ENCODE measurements at regions of chr11 and their contacts with region 1.

Region 1: GRCh38 chr11:65134386-65135253 is at the start of gene SYVN1:
- DNase-seq: peak; percentile 88 to 95 (median 93)
- ATAC-seq: peak; percentile 90
- H3K4me3 ChIP-seq: peak within 1 kb of the TSS; percentile 90
- H3K4me3 Mint-ChIP-seq: peak within 1 kb of the TSS; percentile 89 to 100 (median 99)
- H3K27ac ChIP-seq: peak within 1 kb of the TSS; percentile 99
- H3K27ac Mint-ChIP-seq: peak within 1 kb of the TSS; percentile 97 to 100 (median 99)
- H3K4me1 ChIP-seq: peaks cover 10 to 21% of the 10 kb centered on the region in 2 donors
- H3K4me1 Mint-ChIP-seq: peaks cover 31 to 50% (median 40%) of the 10 kb centered on the region in 7 donors
- H3K27me3 ChIP-seq: no peaks in the 10 kb centered on the region
- H3K27me3 Mint-ChIP-seq: no peaks in the 10 kb centered on the region
- total RNA-seq, gene SYVN1: 61.0 to 84.6 (median 67.9) TPM

Region 2: GRCh38 chr11:63681321-63682049 is 1453.1 kb before region 1 on chr11 and contains the start of gene RTN3:
- CTCF ChIA-PET with region 1: no interaction called
- POLR2A ChIA-PET with region 1: no interaction called
- intact Hi-C with region 1: loop called in 1 of 2 experiments (anchors 5 kb)
- DNase-seq: peak; percentile 97 to 99 (median 98)
- ATAC-seq: peak; percentile 95
- H3K4me3 ChIP-seq: peak within 1 kb of the TSS; percentile 86
- H3K4me3 Mint-ChIP-seq: peak within 1 kb of the TSS; percentile 89 to 97 (median 94)
- H3K27ac ChIP-seq: peak within 1 kb of the TSS; percentile 69
- H3K27ac Mint-ChIP-seq: peak within 1 kb of the TSS; percentile 50 to 97 (median 83)
- H3K4me1 ChIP-seq: peaks cover 6 to 17% of the 10 kb centered on the region in 2 donors
- H3K4me1 Mint-ChIP-seq: peaks cover 20 to 30% (median 27%) of the 10 kb centered on the region in 7 donors
- H3K27me3 ChIP-seq: no peaks in the 10 kb centered on the region
- H3K27me3 Mint-ChIP-seq: peaks cover 0 to 12% (median 0%) of the 10 kb centered on the region in 5 donors
- total RNA-seq, gene RTN3: 20.8 to 65.7 (median 34.4) TPM

Region 3: GRCh38 chr11:64566042-64566914 is 568.3 kb before region 1 on chr11:
- CTCF ChIA-PET with region 1: no interaction called
- POLR2A ChIA-PET with region 1: no interaction called
- intact Hi-C with region 1: no loop called
- DNase-seq: peak in 6 of 9 donors; percentile 8 to 61 (median 17)
- ATAC-seq: peak; percentile 80
- H3K4me3 ChIP-seq: no peak overlapping the region
- H3K4me3 Mint-ChIP-seq: peak overlapping the region in 4 of 10 donors; percentile 13 to 41 (median 30)
- H3K27ac ChIP-seq: no peak overlapping the region
- H3K27ac Mint-ChIP-seq: peak overlapping the region in 5 of 9 donors; percentile 50 to 72 (median 64)
- H3K4me1 ChIP-seq: no peaks in the 10 kb centered on the region
- H3K4me1 Mint-ChIP-seq: peaks cover 0 to 7% (median 4%) of the 10 kb centered on the region in 7 donors
- H3K27me3 ChIP-seq: no peaks in the 10 kb centered on the region
- H3K27me3 Mint-ChIP-seq: no peaks in the 10 kb centered on the region

Region 4: DNA sequence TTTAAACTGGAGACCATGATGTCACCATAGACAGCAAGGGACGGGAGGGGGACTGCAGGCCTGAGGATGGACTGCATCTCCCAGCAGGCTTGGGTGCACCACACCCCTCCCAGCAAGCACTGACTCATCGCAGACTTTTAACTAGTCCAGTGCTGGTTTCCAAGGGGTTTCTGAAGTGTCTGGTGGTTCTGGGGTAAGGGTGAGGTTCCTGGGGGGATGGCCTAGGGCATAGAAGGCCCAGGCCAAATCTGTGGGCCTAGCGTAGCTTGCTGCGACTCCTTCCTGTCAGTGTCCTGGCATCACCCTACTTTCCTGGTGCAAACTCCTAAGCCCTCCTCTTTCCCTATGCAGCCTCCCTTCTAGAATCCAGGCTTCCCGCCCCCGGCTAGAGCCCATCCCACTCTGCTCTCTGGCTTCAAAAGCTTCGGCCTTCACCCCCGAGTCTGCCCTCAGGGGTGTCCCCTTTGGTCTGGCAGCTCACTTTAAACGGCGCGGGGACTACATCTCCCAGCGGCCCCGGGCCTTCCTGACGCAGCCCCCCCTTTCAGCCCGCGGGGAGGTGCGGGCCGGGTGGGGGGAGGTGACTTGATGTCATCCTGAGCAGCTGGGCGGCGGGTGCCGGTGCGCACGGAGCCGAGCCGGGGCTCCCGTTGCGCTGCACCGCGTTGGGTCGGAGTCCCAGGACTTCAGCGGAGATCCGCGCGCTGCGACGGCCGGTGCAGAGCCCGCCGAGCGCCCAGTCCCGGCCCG is 210.3 kb before region 1 on chr11 and contains the start of gene PPP2R5B:
- CTCF ChIA-PET with region 1: interaction called, 3 read pairs
- POLR2A ChIA-PET with region 1: interaction called, 3 read pairs
- intact Hi-C with region 1: loop called in 1 of 2 experiments (anchors 1 kb)
- DNase-seq: peak; percentile 79 to 92 (median 89)
- ATAC-seq: peak; percentile 95
- H3K4me3 ChIP-seq: peak within 1 kb of the TSS; percentile 67
- H3K4me3 Mint-ChIP-seq: peak within 1 kb of the TSS; percentile 89 to 99 (median 96)
- H3K27ac ChIP-seq: peak within 1 kb of the TSS; percentile 81
- H3K27ac Mint-ChIP-seq: peak within 1 kb of the TSS; percentile 95 to 100 (median 98)
- H3K4me1 ChIP-seq: peaks cover 11 to 15% of the 10 kb centered on the region in 2 donors
- H3K4me1 Mint-ChIP-seq: peaks cover 9 to 24% (median 14%) of the 10 kb centered on the region in 7 donors
- H3K27me3 ChIP-seq: no peaks in the 10 kb centered on the region
- H3K27me3 Mint-ChIP-seq: no peaks in the 10 kb centered on the region
- total RNA-seq, gene PPP2R5B: 11.9 to 19.1 (median 18.8) TPM

Region 5: GRCh38 chr11:65083834-65084597 is 50.6 kb before region 1 on chr11 and contains the starts of genes CDCA5 and ZFPL1:
- CTCF ChIA-PET with region 1: no interaction called
- POLR2A ChIA-PET with region 1: interaction called, 12 read pairs
- intact Hi-C with region 1: loop called (anchors 1 kb)
- DNase-seq: peak; percentile 94 to 98 (median 97)
- ATAC-seq: peak; percentile 96
- H3K4me3 ChIP-seq: peak within 1 kb of the TSS; percentile 61
- H3K4me3 Mint-ChIP-seq: peak within 1 kb of the TSS; percentile 88 to 99 (median 93)
- H3K27ac ChIP-seq: peak within 1 kb of the TSS; percentile 86
- H3K27ac Mint-ChIP-seq: peak within 1 kb of the TSS; percentile 94 to 99 (median 97)
- H3K4me1 ChIP-seq: peaks cover 13 to 14% of the 10 kb centered on the region in 2 donors
- H3K4me1 Mint-ChIP-seq: peaks cover 20 to 49% (median 27%) of the 10 kb centered on the region in 7 donors
- H3K27me3 ChIP-seq: no peaks in the 10 kb centered on the region
- H3K27me3 Mint-ChIP-seq: peaks cover 0 to 4% (median 0%) of the 10 kb centered on the region in 5 donors
- total RNA-seq, gene CDCA5: 0.56 to 68.1 (median 0.81) TPM
- total RNA-seq, gene ZFPL1: 29.9 to 53.0 (median 49.3) TPM

Region 6: DNA sequence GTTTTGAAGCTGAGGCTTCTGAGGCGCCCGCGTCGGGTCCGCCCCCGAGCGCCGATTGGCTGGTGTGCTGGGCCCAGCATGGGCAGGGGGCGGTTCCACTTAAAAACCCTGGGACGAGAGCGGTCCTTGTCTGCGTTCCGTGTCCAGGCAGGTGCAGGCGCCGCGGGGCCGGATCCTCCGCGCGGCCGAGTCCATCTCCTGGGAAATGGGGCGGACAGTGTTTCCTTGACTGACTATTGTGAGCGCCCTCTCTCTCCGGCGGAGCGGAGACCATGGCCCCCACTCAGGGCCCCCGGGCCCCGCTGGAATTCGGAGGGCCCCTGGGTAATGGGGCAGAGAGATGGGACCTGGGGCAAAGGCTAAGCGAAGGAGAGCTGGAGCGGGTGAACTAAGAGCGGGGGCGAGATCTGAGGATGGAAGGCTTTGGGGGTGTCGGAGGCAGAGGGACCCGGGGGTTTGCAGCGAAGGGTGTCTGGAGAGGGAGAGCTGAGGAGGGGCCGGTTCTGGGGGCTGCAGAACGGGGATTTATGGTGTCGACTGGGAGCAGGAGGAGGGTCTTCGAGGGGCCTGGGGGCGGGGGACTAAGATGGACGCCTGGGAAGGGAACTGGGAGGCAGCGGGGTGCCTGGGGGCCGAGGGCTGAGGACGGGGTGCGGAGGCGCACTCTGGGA is 22.7 kb before region 1 on chr11 and contains the start of gene TM7SF2:
- CTCF ChIA-PET with region 1: interaction called, 5 read pairs
- POLR2A ChIA-PET with region 1: interaction called, 237 read pairs
- intact Hi-C with region 1: loop called (anchors 1 kb)
- DNase-seq: peak; percentile 84 to 94 (median 92)
- ATAC-seq: peak; percentile 82
- H3K4me3 ChIP-seq: peak within 1 kb of the TSS; percentile 83
- H3K4me3 Mint-ChIP-seq: peak within 1 kb of the TSS; percentile 85 to 97 (median 89)
- H3K27ac ChIP-seq: peak within 1 kb of the TSS; percentile 74
- H3K27ac Mint-ChIP-seq: peak within 1 kb of the TSS; percentile 80 to 100 (median 90)
- H3K4me1 ChIP-seq: peaks cover 33 to 36% of the 10 kb centered on the region in 2 donors
- H3K4me1 Mint-ChIP-seq: peaks cover 18 to 52% (median 38%) of the 10 kb centered on the region in 7 donors
- H3K27me3 ChIP-seq: no peaks in the 10 kb centered on the region
- H3K27me3 Mint-ChIP-seq: no peaks in the 10 kb centered on the region
- total RNA-seq, gene TM7SF2: 21.6 to 37.8 (median 30.8) TPM

Region 7: GRCh38 chr11:65180877-65181568 is 46.4 kb after region 1 on chr11:
- CTCF ChIA-PET with region 1: no interaction called
- POLR2A ChIA-PET with region 1: interaction called, 43 read pairs
- intact Hi-C with region 1: loop called (anchors 1 kb)
- DNase-seq: peak in 8 of 9 donors; percentile 41 to 71 (median 45)
- ATAC-seq: peak; percentile 85
- H3K4me3 ChIP-seq: peak overlapping the region; percentile 67
- H3K4me3 Mint-ChIP-seq: peak overlapping the region; percentile 80 to 94 (median 90)
- H3K27ac ChIP-seq: peak overlapping the region; percentile 93
- H3K27ac Mint-ChIP-seq: peak overlapping the region; percentile 36 to 91 (median 84)
- H3K4me1 ChIP-seq: peaks cover 6 to 8% of the 10 kb centered on the region in 2 donors
- H3K4me1 Mint-ChIP-seq: peaks cover 7 to 30% (median 22%) of the 10 kb centered on the region in 7 donors
- H3K27me3 ChIP-seq: no peaks in the 10 kb centered on the region
- H3K27me3 Mint-ChIP-seq: peaks cover 0 to 22% (median 0%) of the 10 kb centered on the region in 5 donors

Region 8: GRCh38 chr11:65354265-65355012 is 219.8 kb after region 1 on chr11 and contains the start of gene TIGD3:
- CTCF ChIA-PET with region 1: no interaction called
- POLR2A ChIA-PET with region 1: no interaction called
- intact Hi-C with region 1: loop called in 1 of 2 experiments (anchors 1 kb)
- DNase-seq: peak; percentile 84 to 96 (median 93)
- ATAC-seq: peak; percentile 99
- H3K4me3 ChIP-seq: peak within 1 kb of the TSS; percentile 68
- H3K4me3 Mint-ChIP-seq: peak within 1 kb of the TSS; percentile 90 to 97 (median 92)
- H3K27ac ChIP-seq: peak within 1 kb of the TSS; percentile 73
- H3K27ac Mint-ChIP-seq: peak within 1 kb of the TSS; percentile 75 to 94 (median 89)
- H3K4me1 ChIP-seq: peaks cover 5 to 9% of the 10 kb centered on the region in 2 donors
- H3K4me1 Mint-ChIP-seq: peaks cover 11 to 25% (median 19%) of the 10 kb centered on the region in 7 donors
- H3K27me3 ChIP-seq: no peaks in the 10 kb centered on the region
- H3K27me3 Mint-ChIP-seq: peaks cover 0 to 13% (median 0%) of the 10 kb centered on the region in 5 donors
- total RNA-seq, gene TIGD3: 0.39 to 2.0 (median 1.6) TPM

Measured in naive thymus-derived CD4-positive, alpha-beta T cell (primary cell).